ENCODE measurements at regions of chr2 and their contacts with region 1.

Region 1: DNA sequence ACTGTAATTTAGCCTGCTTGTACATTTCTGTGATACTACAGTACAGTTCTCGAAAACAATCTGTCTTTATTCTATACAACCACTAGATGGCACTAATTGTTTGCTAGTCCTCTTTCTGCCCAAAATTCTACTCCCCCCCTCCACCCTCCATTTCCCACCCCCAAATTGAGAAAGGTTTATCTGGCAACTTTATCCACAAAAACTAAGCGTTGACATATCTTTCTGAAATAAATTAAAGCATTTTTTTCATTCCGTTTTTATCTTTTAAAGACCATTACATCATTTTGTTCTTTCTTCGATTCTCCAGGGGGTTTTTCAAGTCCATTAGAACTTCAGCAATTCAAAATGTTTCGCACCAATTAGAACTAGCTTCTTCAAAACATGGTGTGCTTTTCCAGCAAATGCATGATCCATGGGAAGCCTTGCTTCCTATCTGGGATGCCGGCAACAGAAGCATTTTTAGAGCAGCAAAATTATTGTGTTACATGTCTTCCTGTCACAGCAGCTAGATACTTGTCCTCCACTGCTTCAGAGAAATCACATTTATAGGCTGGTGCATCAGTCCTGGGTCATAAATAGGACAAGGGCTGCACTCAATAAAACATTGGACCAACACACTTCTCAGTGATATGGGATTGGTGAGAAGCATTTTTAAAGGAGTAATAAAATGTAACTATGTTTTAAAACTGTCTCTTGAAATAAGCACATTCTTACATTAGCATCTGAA is 241.3 kb downstream of the PAX3 start:
- DNase-seq: peak; percentile 2 to 41 (median 30)
- ATAC-seq: peak; percentile 55; the same call in 1 of the 3 replicates
- H3K4me3 ChIP-seq: no peak overlapping the region
- H3K27ac ChIP-seq: no peak overlapping the region
- H3K4me1 ChIP-seq: no peaks in the 10 kb centered on the region
- H3K27me3 ChIP-seq: no peaks in the 10 kb centered on the region
- CTCF ChIP-seq: peak in 2 of 3 experiments; percentile 37 to 53; a peak in 3 of 6 replicates
- EP300 ChIP-seq: no peak
- POLR2A ChIP-seq: no peak
- RAD21 ChIP-seq: peak; percentile 58 to 65

Region 2: DNA sequence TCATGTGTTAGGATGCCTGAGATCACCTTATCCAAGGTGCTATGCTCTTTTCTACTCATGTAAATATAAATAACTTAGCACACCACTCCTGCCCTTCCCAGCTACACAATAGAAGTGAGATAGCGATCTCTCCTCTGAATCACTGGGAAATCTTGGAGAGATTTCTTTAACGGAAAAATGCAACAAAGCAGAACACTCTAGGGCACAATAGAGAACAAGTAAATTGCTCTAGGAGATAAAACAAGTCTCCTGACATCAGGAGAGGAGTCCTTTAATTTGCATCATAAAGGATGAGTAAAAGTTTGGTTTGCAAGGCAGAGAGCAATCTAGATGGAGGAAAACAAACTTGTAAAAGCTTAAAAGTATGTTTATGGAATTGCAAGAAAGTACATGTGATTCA is 17.2 kb after region 1 on chr2:
- CTCF ChIA-PET with region 1: no interaction called
- POLR2A ChIA-PET with region 1: no interaction called
- in situ Hi-C with region 1: no loop called
- intact Hi-C with region 1: no loop called
- DNase-seq: no peak
- ATAC-seq: no peak
- H3K4me3 ChIP-seq: no peak overlapping the region
- H3K27ac ChIP-seq: no peak overlapping the region
- H3K4me1 ChIP-seq: no peaks in the 10 kb centered on the region
- H3K27me3 ChIP-seq: no peaks in the 10 kb centered on the region
- CTCF ChIP-seq: no peak
- EP300 ChIP-seq: no peak
- POLR2A ChIP-seq: no peak
- RAD21 ChIP-seq: no peak

Region 3: GRCh38 chr2:222561817-222562645 is 504.5 kb after region 1 on chr2:
- CTCF ChIA-PET with region 1: no interaction called
- POLR2A ChIA-PET with region 1: no interaction called
- in situ Hi-C with region 1: no loop called
- intact Hi-C with region 1: loop called (anchors 2 kb)
- DNase-seq: peak; percentile 22 to 58 (median 34)
- ATAC-seq: peak; percentile 85
- H3K4me3 ChIP-seq: no peak overlapping the region
- H3K27ac ChIP-seq: no peak overlapping the region
- H3K4me1 ChIP-seq: no peaks in the 10 kb centered on the region
- H3K27me3 ChIP-seq: no peaks in the 10 kb centered on the region
- CTCF ChIP-seq: peak; percentile 39 to 66 (median 59)
- EP300 ChIP-seq: no peak
- POLR2A ChIP-seq: 0 out of 2 replicates have a peak, but pooled peaks have one; percentile 10
- RAD21 ChIP-seq: peak; percentile 43 to 61; a peak in 3 of 4 replicates

Region 4: GRCh38 chr2:222613715-222614331 is 556.3 kb after region 1 on chr2:
- CTCF ChIA-PET with region 1: no interaction called
- POLR2A ChIA-PET with region 1: no interaction called
- in situ Hi-C with region 1: no loop called
- intact Hi-C with region 1: loop called (anchors 1 kb)
- DNase-seq: peak in 3 of 4 experiments; percentile 12 to 37 (median 36)
- ATAC-seq: peak; percentile 90
- H3K4me3 ChIP-seq: no peak overlapping the region
- H3K27ac ChIP-seq: no peak overlapping the region
- H3K4me1 ChIP-seq: no peaks in the 10 kb centered on the region; a peak in 1 of 5 replicates
- H3K27me3 ChIP-seq: no peaks in the 10 kb centered on the region
- CTCF ChIP-seq: peak; percentile 45 to 59 (median 58)
- EP300 ChIP-seq: no peak
- POLR2A ChIP-seq: no peak
- RAD21 ChIP-seq: peak; percentile 34 to 55; a peak in 3 of 4 replicates